Activated CD4-positive, alpha-beta memory T cell treated with anti-CD3 and anti-CD28 coated beads for 36 hours (primary cell): ENCODE measurements at regions of chr15 and their contacts with region 1.

Region 1: GRCh38 chr15:90774731-90775484 is 57.8 kb downstream of the BLM start:
- DNase-seq: no peak
- H3K4me3 Mint-ChIP-seq: no peak overlapping the region
- H3K27ac Mint-ChIP-seq: no peak overlapping the region
- H3K4me1 Mint-ChIP-seq: peaks cover 8% of the 10 kb centered on the region
- H3K27me3 Mint-ChIP-seq: no peaks in the 10 kb centered on the region

Region 2: GRCh38 chr15:90735923-90736322 is 39.0 kb before region 1 on chr15:
- CTCF ChIA-PET with region 1: no interaction called
- POLR2A ChIA-PET with region 1: no interaction called
- intact Hi-C with region 1: loop called (anchors 5 kb)
- DNase-seq: no peak
- H3K4me3 Mint-ChIP-seq: no peak overlapping the region
- H3K27ac Mint-ChIP-seq: no peak overlapping the region
- H3K4me1 Mint-ChIP-seq: peaks cover 16% of the 10 kb centered on the region
- H3K27me3 Mint-ChIP-seq: no peaks in the 10 kb centered on the region